Activated CD8-positive, alpha-beta memory T cell treated with anti-CD3 and anti-CD28 coated beads, Interleukin-2, amount 10 ng/mL, durations not matched to agents 7 days and 5 days (primary cell): ENCODE measurements at regions of chr6 and their contacts with region 1.

Region 1: DNA sequence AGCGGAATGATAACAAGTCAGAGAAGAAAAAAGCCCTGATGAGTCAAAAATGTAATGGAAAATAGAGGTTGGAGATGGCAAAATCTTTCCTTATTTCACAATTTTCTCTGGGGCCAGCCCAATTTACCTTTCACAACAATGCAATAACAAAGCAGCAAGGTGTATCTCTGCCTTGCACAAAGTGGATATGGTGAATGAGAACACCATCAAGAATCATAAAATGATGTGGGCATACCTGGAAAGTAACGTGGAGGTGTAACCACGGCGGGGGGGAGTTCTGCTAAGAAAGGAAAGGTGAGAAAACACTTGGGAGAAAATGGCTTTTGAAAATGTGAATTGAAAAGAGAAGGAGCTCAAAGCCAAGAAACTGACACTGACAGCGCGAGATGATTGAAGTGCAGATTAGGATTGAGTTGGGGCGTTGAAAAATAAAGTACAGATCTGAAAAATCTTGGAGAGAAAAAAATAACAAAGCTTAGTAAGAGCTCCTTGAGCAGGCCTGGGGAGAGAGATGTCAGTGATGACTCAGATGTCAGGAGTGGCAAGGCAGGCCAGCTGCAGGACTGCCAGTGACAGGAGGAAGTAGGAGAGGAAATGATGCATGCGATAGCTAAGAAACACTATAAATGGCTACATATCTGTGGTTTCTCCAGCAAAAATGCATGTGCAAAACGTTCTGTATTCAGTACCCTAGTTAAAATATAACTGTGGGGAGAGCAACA is 26.2 kb downstream of the ARHGAP18 start:
- DNase-seq: peak; percentile 84
- ATAC-seq: peak; percentile 95
- H3K4me3 Mint-ChIP-seq: peak overlapping the region; percentile 41
- H3K27ac Mint-ChIP-seq: peak overlapping the region; percentile 87
- H3K4me1 Mint-ChIP-seq: peaks cover 63% of the 10 kb centered on the region
- H3K27me3 Mint-ChIP-seq: no peaks in the 10 kb centered on the region

Region 2: GRCh38 chr6:129672881-129673643 is 10.7 kb before region 1 on chr6:
- CTCF ChIA-PET with region 1: interaction called, 35 read pairs
- DNase-seq: peak; percentile 62
- ATAC-seq: peak; percentile 69
- H3K4me3 Mint-ChIP-seq: peak overlapping the region; percentile 71
- H3K27ac Mint-ChIP-seq: peak overlapping the region; percentile 95
- H3K4me1 Mint-ChIP-seq: peaks cover 55% of the 10 kb centered on the region
- H3K27me3 Mint-ChIP-seq: no peaks in the 10 kb centered on the region

Region 3: DNA sequence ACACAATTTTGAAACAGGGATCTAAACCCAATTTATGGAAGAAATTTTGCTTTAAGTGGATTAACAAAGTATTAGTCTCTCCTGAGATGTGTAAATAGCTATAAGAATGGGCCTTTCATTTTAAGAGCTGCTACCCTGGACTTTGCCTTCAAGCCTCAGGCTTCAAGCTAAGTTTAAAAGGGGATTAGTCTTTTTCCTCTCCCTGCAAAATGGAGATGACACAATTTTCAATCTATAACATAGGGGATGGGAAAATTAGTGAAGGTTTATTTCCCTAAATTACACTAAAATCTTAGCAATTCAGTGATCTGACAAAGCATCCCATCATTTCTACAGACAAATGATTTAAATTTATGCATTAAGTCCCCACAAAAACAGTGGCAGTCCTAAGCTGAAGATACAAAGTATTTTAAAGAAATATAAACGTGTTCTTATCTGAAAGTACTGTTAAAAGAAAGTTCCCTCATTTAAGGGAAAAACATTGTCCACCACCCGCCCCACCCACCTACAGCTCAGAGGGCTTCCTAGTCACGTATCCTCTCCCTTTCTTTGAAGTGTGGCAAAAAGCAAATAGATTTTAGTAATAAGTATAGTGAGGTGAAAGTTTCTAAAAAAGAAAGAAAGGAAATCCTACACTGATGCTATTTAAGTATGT is 11.7 kb after region 1 on chr6:
- CTCF ChIA-PET with region 1: interaction called, 10 read pairs
- DNase-seq: peak; percentile 56
- ATAC-seq: peak; percentile 85
- H3K4me3 Mint-ChIP-seq: peak overlapping the region; percentile 15
- H3K27ac Mint-ChIP-seq: peak overlapping the region; percentile 55
- H3K4me1 Mint-ChIP-seq: peaks cover 62% of the 10 kb centered on the region
- H3K27me3 Mint-ChIP-seq: no peaks in the 10 kb centered on the region